Activated CD4-positive, alpha-beta T cell treated with anti-CD3 and anti-CD28 coated beads, Interleukin-2, amount 10 ng/mL, durations not matched to agents 24 days and 14 days (primary cell): ENCODE measurements at regions of chr3 and their contacts with region 1.

Region 1: GRCh38 chr3:60086811-60087210 is 1037.0 kb upstream of the CFAP20DC start:
- DNase-seq: peak; percentile 82
- H3K4me3 Mint-ChIP-seq: peak overlapping the region; percentile 53
- H3K27ac Mint-ChIP-seq: peak overlapping the region; percentile 87
- H3K4me1 Mint-ChIP-seq: peaks cover 52% of the 10 kb centered on the region
- H3K27me3 Mint-ChIP-seq: no peaks in the 10 kb centered on the region

Region 2: GRCh38 chr3:60101621-60102020 is 14.8 kb after region 1 on chr3:
- intact Hi-C with region 1: loop called (anchors 2 kb)
- DNase-seq: no peak
- H3K4me3 Mint-ChIP-seq: no peak overlapping the region
- H3K27ac Mint-ChIP-seq: no peak overlapping the region
- H3K4me1 Mint-ChIP-seq: peaks cover 21% of the 10 kb centered on the region
- H3K27me3 Mint-ChIP-seq: no peaks in the 10 kb centered on the region

Region 3: GRCh38 chr3:60456180-60456579 is 369.4 kb after region 1 on chr3:
- intact Hi-C with region 1: loop called (anchors 10 kb)
- DNase-seq: no peak
- H3K4me3 Mint-ChIP-seq: no peak overlapping the region
- H3K27ac Mint-ChIP-seq: no peak overlapping the region
- H3K4me1 Mint-ChIP-seq: peaks cover 5% of the 10 kb centered on the region
- H3K27me3 Mint-ChIP-seq: peaks cover 2% of the 10 kb centered on the region

Region 4: DNA sequence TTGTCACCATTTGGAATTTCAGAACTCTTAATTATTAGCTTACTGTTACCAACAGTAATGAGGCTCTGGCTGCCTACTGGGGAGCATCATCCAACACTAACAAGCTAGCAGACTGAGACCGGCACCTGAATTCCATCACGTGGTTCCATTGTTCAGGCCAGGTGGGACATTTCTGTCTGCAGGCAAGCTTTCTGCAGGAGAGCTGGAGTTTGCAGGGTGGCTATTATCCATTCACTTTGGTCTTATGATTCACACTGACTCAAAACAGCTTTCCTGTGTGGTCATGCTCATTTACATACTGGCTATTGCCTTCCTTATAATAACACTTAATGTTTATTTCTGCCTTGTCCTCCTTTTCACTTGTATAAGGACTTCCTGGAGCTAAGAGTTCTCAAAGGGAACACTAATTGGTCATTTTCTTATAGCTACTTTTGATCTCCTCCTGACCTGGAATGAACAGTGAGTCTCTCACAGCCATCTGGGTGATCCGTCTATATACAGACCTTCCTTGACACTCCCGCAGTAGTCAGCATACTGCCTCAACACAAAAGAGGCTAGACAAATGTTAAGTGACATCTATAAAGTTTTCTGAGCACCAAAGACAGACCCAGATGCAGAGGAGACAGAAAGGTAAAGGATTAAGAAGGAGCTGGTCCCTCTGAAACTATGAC is 469.0 kb after region 1 on chr3:
- intact Hi-C with region 1: loop called (anchors 10 kb)
- DNase-seq: peak; percentile 56
- H3K4me3 Mint-ChIP-seq: no peak overlapping the region
- H3K27ac Mint-ChIP-seq: no peak overlapping the region
- H3K4me1 Mint-ChIP-seq: peaks cover 24% of the 10 kb centered on the region
- H3K27me3 Mint-ChIP-seq: no peaks in the 10 kb centered on the region

Region 5: GRCh38 chr3:61520966-61521628 is 1434.3 kb after region 1 on chr3:
- intact Hi-C with region 1: loop called (anchors 10 kb)
- DNase-seq: peak; percentile 84
- H3K4me3 Mint-ChIP-seq: peak overlapping the region; percentile 48
- H3K27ac Mint-ChIP-seq: peak overlapping the region; percentile 80
- H3K4me1 Mint-ChIP-seq: peaks cover 37% of the 10 kb centered on the region
- H3K27me3 Mint-ChIP-seq: no peaks in the 10 kb centered on the region

Region 6: GRCh38 chr3:61561374-61562041 is 1474.7 kb after region 1 on chr3 and contains the start of gene PTPRG:
- intact Hi-C with region 1: loop called (anchors 10 kb)
- DNase-seq: peak; percentile 84
- H3K4me3 Mint-ChIP-seq: peak within 1 kb of the TSS; percentile 96
- H3K27ac Mint-ChIP-seq: peak within 1 kb of the TSS; percentile 74
- H3K4me1 Mint-ChIP-seq: peaks cover 16% of the 10 kb centered on the region
- H3K27me3 Mint-ChIP-seq: peaks cover 59% of the 10 kb centered on the region
- total RNA-seq, gene PTPRG: 4.2 and 4.6 TPM in 2 replicates